ENCODE measurements at regions of chr16 and their contacts with region 1.

Region 1: DNA sequence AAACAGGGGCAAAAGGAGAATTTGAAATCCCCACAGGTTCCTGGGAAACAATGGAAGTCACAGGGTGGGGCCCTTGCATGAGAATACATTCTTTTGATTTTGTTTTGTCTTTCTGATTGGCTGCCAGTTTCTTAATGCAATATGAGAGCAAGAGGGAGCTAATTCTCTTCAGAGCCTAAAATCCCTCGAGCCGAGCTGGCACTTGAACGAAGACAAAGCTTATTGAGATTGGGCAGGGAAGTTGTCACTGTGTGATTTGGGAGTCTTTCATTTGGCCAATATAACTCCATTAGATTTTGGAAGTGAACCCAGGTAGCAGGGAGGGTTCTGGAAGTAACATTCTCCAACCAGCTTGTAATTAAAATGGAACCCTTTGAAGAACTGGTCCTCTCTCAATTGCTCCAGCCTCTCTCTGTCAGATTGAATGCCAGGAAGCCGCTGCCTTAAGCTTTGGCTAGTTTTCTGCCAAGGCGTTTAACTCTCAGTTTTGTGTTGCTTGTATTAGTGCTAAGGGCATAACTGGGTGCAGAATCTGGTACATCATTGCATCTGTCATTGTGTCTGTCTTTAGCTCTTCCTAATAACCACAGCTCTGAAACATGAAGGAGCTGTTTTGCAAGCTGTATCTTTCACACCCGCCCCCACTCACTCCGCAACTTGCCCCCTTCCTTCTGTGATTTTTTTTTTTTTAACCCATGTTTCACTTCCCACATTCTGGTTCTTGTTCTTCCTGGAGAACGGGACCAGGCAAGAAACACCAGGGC is 272.0 kb downstream of the MAF start:
- H3K4me3 Mint-ChIP-seq: peak overlapping the region; percentile 49
- H3K27ac Mint-ChIP-seq: peak overlapping the region; percentile 92
- H3K4me1 Mint-ChIP-seq: peaks cover 70% of the 10 kb centered on the region
- H3K27me3 Mint-ChIP-seq: peaks cover 1% of the 10 kb centered on the region

Region 2: GRCh38 chr16:79261481-79261940 is 67.1 kb before region 1 on chr16:
- intact Hi-C with region 1: loop called (anchors 5 kb)
- H3K4me3 Mint-ChIP-seq: no peak overlapping the region
- H3K27ac Mint-ChIP-seq: peak overlapping the region; percentile 56
- H3K4me1 Mint-ChIP-seq: peaks cover 68% of the 10 kb centered on the region
- H3K27me3 Mint-ChIP-seq: peaks cover 19% of the 10 kb centered on the region

Region 3: DNA sequence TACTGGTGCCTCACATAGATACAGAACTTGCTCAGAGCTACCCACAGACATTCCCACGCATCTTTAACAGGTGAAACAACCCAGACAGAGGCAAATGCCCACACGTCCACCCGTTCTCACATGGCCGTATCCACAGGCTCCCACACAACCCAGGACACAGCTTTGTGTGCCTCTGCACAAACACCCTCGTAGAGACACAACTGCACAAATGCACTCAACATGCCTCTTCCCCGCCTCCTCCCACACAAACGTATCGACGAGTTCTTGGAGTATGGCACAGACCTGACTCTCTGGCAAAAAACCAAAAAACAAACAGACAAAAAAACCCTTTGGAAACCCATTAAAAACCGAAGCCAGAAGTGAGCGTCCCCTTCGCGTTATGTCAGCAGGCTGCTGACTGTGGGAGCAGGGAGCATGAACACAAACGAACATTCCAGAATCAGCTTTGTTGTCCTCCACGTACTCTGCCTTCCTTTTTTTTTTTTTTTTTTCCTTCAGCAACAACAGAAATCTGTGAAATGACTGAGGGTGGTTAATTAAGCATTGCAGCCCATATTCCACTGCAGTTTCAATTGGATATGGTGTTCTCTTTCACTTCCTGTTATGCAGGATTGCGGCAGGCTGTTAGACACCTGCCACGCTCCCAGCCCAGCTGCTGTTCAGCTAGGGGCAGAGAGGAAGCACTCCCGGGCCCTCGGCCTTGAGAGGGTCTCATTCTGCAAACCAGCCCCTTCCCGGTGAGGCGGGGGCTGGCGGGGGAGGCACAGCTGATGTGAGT is 41.7 kb before region 1 on chr16:
- intact Hi-C with region 1: no loop called
- H3K4me3 Mint-ChIP-seq: peak overlapping the region; percentile 37
- H3K27ac Mint-ChIP-seq: peak overlapping the region; percentile 20
- H3K4me1 Mint-ChIP-seq: peaks cover 30% of the 10 kb centered on the region
- H3K27me3 Mint-ChIP-seq: peaks cover 32% of the 10 kb centered on the region

Region 4: GRCh38 chr16:79316004-79316458 is 12.6 kb before region 1 on chr16:
- intact Hi-C with region 1: loop called (anchors 1 kb)
- H3K4me3 Mint-ChIP-seq: no peak overlapping the region
- H3K27ac Mint-ChIP-seq: peak overlapping the region; percentile 85
- H3K4me1 Mint-ChIP-seq: peaks cover 71% of the 10 kb centered on the region
- H3K27me3 Mint-ChIP-seq: peaks cover 21% of the 10 kb centered on the region

Region 5: DNA sequence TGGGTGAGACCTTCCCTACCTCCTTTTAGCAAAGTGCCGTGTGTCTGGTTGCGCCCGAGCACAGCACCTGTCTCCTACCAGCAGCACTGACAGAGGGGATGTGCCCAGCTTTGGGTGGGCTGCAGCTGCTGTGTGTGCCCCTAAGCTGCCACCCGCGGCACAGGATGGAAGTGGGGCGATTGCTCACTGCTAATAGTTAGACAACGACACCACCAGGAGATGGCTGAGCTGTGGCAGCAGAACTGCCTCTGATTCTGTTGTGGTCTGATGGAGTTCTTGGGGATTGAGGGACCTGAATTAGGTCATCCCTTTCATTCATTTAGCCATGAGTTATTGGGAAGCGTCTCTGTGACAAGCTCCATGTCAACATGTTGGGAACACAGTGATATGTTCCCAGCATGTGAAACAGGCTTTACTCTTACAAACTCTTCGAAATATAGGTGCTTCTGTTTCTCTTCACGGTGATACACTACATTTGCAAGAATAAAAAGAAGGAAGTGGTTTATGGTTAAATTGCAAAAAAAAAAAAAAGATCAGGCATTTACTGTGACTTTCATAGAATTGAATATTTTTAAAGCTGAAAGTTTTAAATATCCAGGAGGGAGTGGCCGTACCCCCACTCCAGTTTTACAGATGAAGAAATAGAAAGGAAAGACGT is 87.5 kb after region 1 on chr16:
- intact Hi-C with region 1: loop called (anchors 2 kb)
- H3K4me3 Mint-ChIP-seq: peak overlapping the region; percentile 15
- H3K27ac Mint-ChIP-seq: peak overlapping the region; percentile 92
- H3K4me1 Mint-ChIP-seq: peaks cover 83% of the 10 kb centered on the region
- H3K27me3 Mint-ChIP-seq: peaks cover 8% of the 10 kb centered on the region

Region 6: DNA sequence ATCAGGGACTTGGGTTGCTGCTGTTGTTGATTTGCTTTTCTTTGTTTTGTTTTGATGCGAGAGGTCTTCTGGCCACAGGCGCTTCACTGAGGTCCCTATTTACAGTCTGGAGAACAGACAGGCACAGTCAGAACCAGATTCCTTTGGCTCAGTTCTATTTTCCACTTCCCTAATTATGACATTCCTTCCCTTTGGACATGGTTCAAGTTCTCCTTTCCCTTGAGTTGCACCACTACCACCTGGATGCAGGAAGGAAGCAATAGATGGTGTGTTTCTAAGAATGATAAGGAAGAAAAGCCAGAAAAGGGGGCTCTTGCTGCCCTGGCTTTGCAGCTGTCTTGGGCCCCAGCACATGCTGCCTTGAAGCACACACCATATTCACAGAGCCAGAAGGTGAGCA is 111.3 kb after region 1 on chr16:
- intact Hi-C with region 1: loop called (anchors 10 kb)
- H3K4me3 Mint-ChIP-seq: peak overlapping the region; percentile 50
- H3K27ac Mint-ChIP-seq: peak overlapping the region; percentile 82
- H3K4me1 Mint-ChIP-seq: peaks cover 65% of the 10 kb centered on the region
- H3K27me3 Mint-ChIP-seq: peaks cover 19% of the 10 kb centered on the region

Measured in dendritic cell treated with granulocyte-macrophage colony-stimulating factor and Interleukin-4, amounts not matched to agents 40 ng/mL and 50 ng/mL, for 4 days (primary cell).